Mammary epithelial cell (primary cell): ENCODE measurements at regions of chr15 and their contacts with region 1.

Region 1: GRCh38 chr15:90233376-90234095 is at the start of gene CIB1:
- DNase-seq: peak; percentile 96
- H3K4me3 ChIP-seq: peak within 1 kb of the TSS; percentile 70 to 91 (median 88)
- H3K27ac ChIP-seq: peak within 1 kb of the TSS; percentile 61
- H3K4me1 ChIP-seq: peaks cover 5% of the 10 kb centered on the region
- H3K27me3 ChIP-seq: no peaks in the 10 kb centered on the region
- CTCF ChIP-seq: peak; percentile 21 to 67
- total RNA-seq, gene CIB1: 14.8 to 74.6 TPM

Region 2: GRCh38 chr15:90143166-90143655 is 90.3 kb before region 1 on chr15:
- CTCF ChIA-PET with region 1: interaction called, 12 read pairs
- dilution Hi-C with region 1: no loop called
- in situ Hi-C with region 1: no loop called
- intact Hi-C with region 1: no loop called
- DNase-seq: peak; percentile 48
- H3K4me3 ChIP-seq: no peak overlapping the region
- H3K27ac ChIP-seq: no peak overlapping the region
- H3K4me1 ChIP-seq: peaks cover 10% of the 10 kb centered on the region
- H3K27me3 ChIP-seq: no peaks in the 10 kb centered on the region
- CTCF ChIP-seq: peak; percentile 56 to 78

Region 3: GRCh38 chr15:90265271-90266060 is 31.9 kb after region 1 on chr15 and contains the start of gene NGRN:
- CTCF ChIA-PET with region 1: interaction called, 3 read pairs
- dilution Hi-C with region 1: no loop called
- in situ Hi-C with region 1: no loop called
- intact Hi-C with region 1: loop called (anchors 1 kb)
- DNase-seq: peak; percentile 90
- H3K4me3 ChIP-seq: peak within 1 kb of the TSS; percentile 55 to 64 (median 58)
- H3K27ac ChIP-seq: peak within 1 kb of the TSS; percentile 70
- H3K4me1 ChIP-seq: peaks cover 37% of the 10 kb centered on the region
- H3K27me3 ChIP-seq: no peaks in the 10 kb centered on the region
- CTCF ChIP-seq: no peak
- total RNA-seq, gene NGRN: 55.3 to 77.2 TPM